ENCODE measurements at regions of chr4 and their contacts with region 1.

Region 1: GRCh38 chr4:114752391-114753165 is 154.0 kb downstream of the UGT8 start:
- DNase-seq: no peak
- H3K4me3 ChIP-seq: no peak overlapping the region
- H3K27ac ChIP-seq: no peak overlapping the region
- H3K4me1 ChIP-seq: no peaks in the 10 kb centered on the region
- H3K27me3 ChIP-seq: no peaks in the 10 kb centered on the region
- CTCF ChIP-seq: no peak
- EP300 ChIP-seq: no peak
- POLR2A ChIP-seq: no peak

Region 2: DNA sequence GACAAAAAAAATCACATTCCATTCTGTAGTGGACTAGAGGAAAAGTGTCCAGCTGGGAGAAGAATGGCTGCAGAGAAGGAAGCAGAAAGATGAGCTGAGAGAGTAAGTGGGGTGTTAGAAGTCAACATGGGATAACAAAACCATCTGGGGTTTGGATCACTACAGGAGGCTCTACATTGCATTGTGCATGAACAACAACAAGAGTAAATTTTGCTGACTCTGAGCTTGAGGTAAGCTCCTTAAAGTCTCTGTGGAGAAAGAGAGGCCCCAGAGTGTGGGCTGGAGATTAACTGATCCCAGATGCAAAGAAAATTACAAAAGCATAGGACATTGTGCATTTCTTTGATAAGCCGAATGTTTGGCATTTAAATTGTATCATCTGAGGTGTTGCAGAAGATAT is 25.1 kb before region 1 on chr4:
- in situ Hi-C with region 1: no loop called
- intact Hi-C with region 1: loop called (anchors 2 kb)
- DNase-seq: no peak
- H3K4me3 ChIP-seq: no peak overlapping the region
- H3K27ac ChIP-seq: no peak overlapping the region
- H3K4me1 ChIP-seq: no peaks in the 10 kb centered on the region
- H3K27me3 ChIP-seq: no peaks in the 10 kb centered on the region
- CTCF ChIP-seq: no peak
- EP300 ChIP-seq: no peak
- POLR2A ChIP-seq: no peak

Measured in transverse colon (tissue), 4 donors.